ENCODE measurements at regions of chr6 and their contacts with region 1.

Region 1: DNA sequence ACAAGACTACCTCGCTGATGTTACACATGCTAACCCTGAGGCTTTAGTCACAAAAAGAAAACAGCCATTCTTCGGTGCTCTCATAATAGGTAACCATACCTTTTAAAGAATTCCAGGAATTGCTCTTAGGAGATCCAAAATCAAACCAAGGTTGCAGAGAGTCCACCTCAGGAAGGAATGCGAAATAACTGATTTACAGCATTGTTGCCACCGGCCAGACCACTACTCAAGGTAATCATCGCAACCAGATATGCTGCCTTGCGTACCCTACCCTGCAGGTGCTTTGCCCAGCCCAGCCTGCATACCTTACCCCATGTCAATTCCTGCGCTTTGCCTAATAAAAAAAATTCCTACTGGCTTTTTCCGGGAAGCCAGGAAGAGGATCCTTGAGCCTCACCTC is 27.0 kb downstream of the NUP153 start:
- DNase-seq: no peak
- ATAC-seq: no peak
- H3K4me3 ChIP-seq: no peak overlapping the region
- H3K4me3 Mint-ChIP-seq: no peak overlapping the region
- H3K27ac ChIP-seq: no peak overlapping the region
- H3K27ac Mint-ChIP-seq: no peak overlapping the region
- H3K4me1 ChIP-seq: no peaks in the 10 kb centered on the region
- H3K4me1 Mint-ChIP-seq: peaks cover 47% of the 10 kb centered on the region
- H3K27me3 ChIP-seq: no peaks in the 10 kb centered on the region
- H3K27me3 Mint-ChIP-seq: no peaks in the 10 kb centered on the region
- CTCF ChIP-seq: no peak

Region 2: DNA sequence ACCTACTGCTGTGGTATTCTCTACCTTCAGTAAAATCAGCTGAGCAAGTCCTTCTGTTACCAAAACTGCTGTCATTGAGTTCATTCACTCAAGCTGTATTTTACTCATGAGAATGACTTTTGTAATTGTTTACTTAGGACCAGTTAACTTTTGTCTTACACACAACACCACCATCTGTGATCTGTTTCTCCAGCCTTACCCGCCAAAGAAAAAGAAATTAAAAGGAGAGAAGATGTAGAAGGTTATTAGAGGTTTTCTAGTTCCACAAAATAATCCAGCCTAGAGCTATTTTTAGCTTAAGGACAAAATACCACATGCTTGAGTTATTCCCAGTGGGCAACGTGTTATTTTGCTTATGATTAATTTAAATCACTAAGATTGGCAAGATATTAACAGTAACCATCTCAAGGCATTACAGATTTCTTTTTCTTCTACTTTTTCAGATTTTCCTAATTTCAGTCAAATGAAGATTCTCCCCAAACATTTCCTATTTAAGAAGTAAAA is 41.5 kb before region 1 on chr6:
- CTCF ChIA-PET with region 1: no interaction called
- POLR2A ChIA-PET with region 1: no interaction called
- intact Hi-C with region 1: loop called (anchors 5 kb)
- DNase-seq: no peak
- ATAC-seq: no peak
- H3K4me3 ChIP-seq: no peak overlapping the region
- H3K4me3 Mint-ChIP-seq: no peak overlapping the region
- H3K27ac ChIP-seq: no peak overlapping the region
- H3K27ac Mint-ChIP-seq: no peak overlapping the region
- H3K4me1 ChIP-seq: no peaks in the 10 kb centered on the region
- H3K4me1 Mint-ChIP-seq: peaks cover 12% of the 10 kb centered on the region
- H3K27me3 ChIP-seq: no peaks in the 10 kb centered on the region
- H3K27me3 Mint-ChIP-seq: no peaks in the 10 kb centered on the region
- CTCF ChIP-seq: no peak

Region 3: DNA sequence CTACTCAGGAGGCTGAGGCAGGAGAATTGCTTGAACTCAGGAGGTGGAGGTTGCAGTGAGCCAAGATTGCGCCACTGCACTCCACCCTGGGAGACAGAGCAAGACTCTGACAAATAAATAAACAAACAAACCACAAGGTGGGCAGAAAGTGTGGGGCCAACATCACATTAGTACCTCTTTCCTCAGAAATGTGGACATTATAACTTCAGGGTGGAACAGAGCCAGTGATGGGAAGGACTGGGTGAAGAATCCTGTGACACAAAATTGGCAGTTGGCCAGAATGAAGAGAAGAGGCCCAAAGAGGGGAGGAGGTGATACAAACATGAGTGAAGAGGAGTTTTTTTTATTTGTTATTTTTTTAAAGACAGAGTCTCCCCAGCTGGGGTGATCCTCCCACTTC is 23.6 kb before region 1 on chr6:
- CTCF ChIA-PET with region 1: no interaction called
- POLR2A ChIA-PET with region 1: no interaction called
- intact Hi-C with region 1: no loop called
- DNase-seq: no peak
- ATAC-seq: no peak
- H3K4me3 ChIP-seq: no peak overlapping the region
- H3K4me3 Mint-ChIP-seq: no peak overlapping the region
- H3K27ac ChIP-seq: no peak overlapping the region
- H3K27ac Mint-ChIP-seq: no peak overlapping the region
- H3K4me1 ChIP-seq: no peaks in the 10 kb centered on the region
- H3K4me1 Mint-ChIP-seq: no peaks in the 10 kb centered on the region
- H3K27me3 ChIP-seq: no peaks in the 10 kb centered on the region
- H3K27me3 Mint-ChIP-seq: no peaks in the 10 kb centered on the region
- CTCF ChIP-seq: no peak

Measured in B cell (primary cell).